GM18951 (cell line): ENCODE measurements at regions of chr4 and their contacts with region 1.

Region 1: DNA sequence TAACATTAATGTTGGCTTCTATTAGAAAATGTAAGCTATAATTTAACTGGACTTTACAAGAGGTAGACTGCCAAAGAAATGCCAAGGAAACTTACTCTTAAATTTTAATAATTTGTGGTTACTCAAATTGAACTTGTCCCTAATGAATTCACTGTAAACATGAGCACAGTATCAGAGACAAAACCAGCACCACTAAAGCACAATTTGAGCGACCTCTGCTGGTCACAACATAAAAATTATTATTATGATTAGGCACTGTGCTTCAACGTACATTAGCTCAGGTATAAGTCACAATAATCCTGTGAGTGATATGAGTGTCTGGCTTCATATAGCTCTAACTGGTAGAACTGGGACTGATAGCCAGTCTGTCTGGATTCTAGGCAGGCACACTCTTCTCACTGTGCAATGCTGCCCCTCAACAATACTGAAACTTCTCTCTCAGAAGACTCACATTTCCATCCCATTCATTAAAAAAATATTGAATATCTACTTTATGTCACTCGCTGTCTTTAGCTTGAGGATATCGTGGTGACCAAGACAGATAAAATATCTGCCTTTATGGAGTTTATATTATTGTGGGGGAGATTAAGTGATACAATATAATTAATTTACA is 8.0 kb downstream of the NUDT6 start:
- POLR2A ChIP-seq: no peak

Region 2: GRCh38 chr4:122758033-122758432 is 156.4 kb before region 1 on chr4:
- in situ Hi-C with region 1: loop called (anchors 5 kb)
- POLR2A ChIP-seq: no peak

Region 3: GRCh38 chr4:123430031-123430430 is 515.6 kb after region 1 on chr4:
- in situ Hi-C with region 1: no loop called
- POLR2A ChIP-seq: no peak